HCT116 (cell line): ENCODE measurements at regions of chr18 and their contacts with region 1.

Region 1: DNA sequence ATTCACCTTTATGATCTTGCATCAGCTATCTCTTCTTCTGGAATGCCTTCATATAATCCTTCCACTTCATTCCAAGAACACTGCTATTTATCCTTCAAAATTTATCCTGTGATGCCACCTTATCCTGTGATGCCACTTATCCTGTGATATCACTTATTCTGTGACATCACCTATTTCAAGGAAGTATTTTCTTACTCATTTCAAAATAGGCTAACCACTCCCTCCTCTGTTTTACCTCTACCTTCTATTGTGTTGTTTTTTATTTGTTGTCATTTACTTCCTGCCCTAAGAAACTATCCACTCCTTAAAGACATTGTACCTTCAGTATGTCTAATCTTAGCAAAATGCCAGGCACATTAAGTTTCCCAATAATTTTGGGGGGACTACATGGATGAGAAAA is 38.8 kb downstream of the CD226 start:
- DNase-seq: no peak
- ATAC-seq: no peak
- H3K4me3 ChIP-seq: no peak overlapping the region
- H3K27ac ChIP-seq: no peak overlapping the region
- H3K4me1 ChIP-seq: no peaks in the 10 kb centered on the region
- H3K27me3 ChIP-seq: no peaks in the 10 kb centered on the region
- CTCF ChIP-seq: no peak
- POLR2A ChIP-seq: no peak
- RAD21 ChIP-seq: no peak

Region 2: DNA sequence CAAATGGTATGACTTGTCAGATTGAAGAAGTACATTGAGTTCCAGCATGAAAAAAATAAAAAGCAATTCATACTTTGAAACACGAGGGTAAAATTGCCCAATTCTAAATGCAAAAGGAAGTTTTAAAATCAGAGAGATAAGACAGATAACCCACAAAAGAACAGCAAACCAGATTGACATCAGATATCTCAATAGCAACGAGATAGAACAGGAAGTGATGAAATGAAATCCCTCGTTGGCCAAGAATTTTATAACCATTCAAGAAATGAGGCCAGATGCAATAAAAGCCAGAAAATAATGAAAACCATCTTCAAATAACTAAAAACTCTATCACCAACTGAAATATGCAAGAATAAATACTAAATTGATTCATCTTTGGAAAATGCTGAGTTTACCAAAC is 134.0 kb before region 1 on chr18:
- CTCF ChIA-PET with region 1: no interaction called
- POLR2A ChIA-PET with region 1: no interaction called
- RAD21 ChIA-PET with region 1: no interaction called
- intact Hi-C with region 1: no loop called
- DNase-seq: no peak
- ATAC-seq: no peak
- H3K4me3 ChIP-seq: no peak overlapping the region
- H3K27ac ChIP-seq: no peak overlapping the region
- H3K4me1 ChIP-seq: no peaks in the 10 kb centered on the region
- H3K27me3 ChIP-seq: no peaks in the 10 kb centered on the region
- CTCF ChIP-seq: no peak
- POLR2A ChIP-seq: no peak
- RAD21 ChIP-seq: no peak

Region 3: DNA sequence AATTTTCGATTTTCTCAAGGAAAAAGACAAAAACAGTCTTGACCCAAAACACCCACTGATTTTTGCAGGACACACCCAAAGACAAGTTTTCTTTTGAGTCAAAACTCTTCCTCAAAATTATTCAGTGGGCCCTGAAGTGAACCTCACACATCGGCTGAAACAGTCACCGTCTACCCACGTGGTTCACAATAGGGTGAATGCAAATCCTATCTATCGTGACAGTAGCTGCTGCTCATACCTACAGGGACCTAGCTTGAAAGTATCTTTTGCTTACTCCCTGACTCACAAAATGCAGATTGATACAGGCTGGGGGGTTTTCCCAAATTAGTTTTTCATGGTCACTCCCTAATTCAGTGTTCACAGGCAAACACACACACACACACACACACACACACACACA is 49.6 kb after region 1 on chr18:
- CTCF ChIA-PET with region 1: no interaction called
- POLR2A ChIA-PET with region 1: no interaction called
- RAD21 ChIA-PET with region 1: no interaction called
- intact Hi-C with region 1: loop called (anchors 5 kb)
- DNase-seq: no peak
- ATAC-seq: no peak
- H3K4me3 ChIP-seq: no peak overlapping the region
- H3K27ac ChIP-seq: no peak overlapping the region
- H3K4me1 ChIP-seq: no peaks in the 10 kb centered on the region
- H3K27me3 ChIP-seq: no peaks in the 10 kb centered on the region
- CTCF ChIP-seq: no peak
- POLR2A ChIP-seq: no peak
- RAD21 ChIP-seq: no peak